IMR-90 (cell line): ENCODE measurements at regions of chr17 and their contacts with region 1.

Region 1: GRCh38 chr17:5097101-5097834 is 14.4 kb downstream of the ZNF232 start:
- DNase-seq: no peak
- ATAC-seq: no peak
- H3K4me3 ChIP-seq: peak overlapping the region; percentile 9; the same call in 1 of the 2 replicates
- H3K27ac ChIP-seq: no peak overlapping the region
- H3K4me1 ChIP-seq: no peaks in the 10 kb centered on the region
- H3K27me3 ChIP-seq: peaks cover 8% of the 10 kb centered on the region; the same call in 1 of the 2 replicates
- CTCF ChIP-seq: no peak
- POLR2A ChIP-seq: no peak
- RAD21 ChIP-seq: no peak

Region 2: DNA sequence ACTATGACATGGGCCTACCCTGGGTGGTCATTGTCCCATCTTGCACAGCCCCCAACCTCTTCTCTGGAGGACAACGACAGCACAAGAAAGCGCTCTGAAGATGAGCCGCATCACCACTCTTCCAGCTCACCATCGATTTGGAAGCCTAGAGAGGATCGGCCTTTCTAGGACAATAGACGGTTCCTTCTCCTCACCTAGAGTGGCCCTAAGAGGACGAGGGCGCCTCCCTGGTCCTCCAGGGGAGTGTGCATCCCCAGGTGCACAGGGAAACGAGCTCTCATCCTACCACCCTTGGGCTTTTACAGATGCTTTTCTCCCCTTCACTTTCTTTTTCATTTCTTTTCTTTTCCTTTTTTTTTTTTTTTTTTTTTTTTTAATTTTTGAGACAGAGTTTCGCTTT is 41.7 kb before region 1 on chr17:
- CTCF ChIA-PET with region 1: no interaction called
- POLR2A ChIA-PET with region 1: no interaction called
- dilution Hi-C with region 1: no loop called
- in situ Hi-C with region 1: no loop called
- intact Hi-C with region 1: no loop called
- DNase-seq: no peak
- ATAC-seq: no peak
- H3K4me3 ChIP-seq: no peak overlapping the region
- H3K27ac ChIP-seq: no peak overlapping the region
- H3K4me1 ChIP-seq: no peaks in the 10 kb centered on the region
- H3K27me3 ChIP-seq: peaks cover 9% of the 10 kb centered on the region
- CTCF ChIP-seq: no peak
- POLR2A ChIP-seq: no peak
- RAD21 ChIP-seq: no peak

Region 3: DNA sequence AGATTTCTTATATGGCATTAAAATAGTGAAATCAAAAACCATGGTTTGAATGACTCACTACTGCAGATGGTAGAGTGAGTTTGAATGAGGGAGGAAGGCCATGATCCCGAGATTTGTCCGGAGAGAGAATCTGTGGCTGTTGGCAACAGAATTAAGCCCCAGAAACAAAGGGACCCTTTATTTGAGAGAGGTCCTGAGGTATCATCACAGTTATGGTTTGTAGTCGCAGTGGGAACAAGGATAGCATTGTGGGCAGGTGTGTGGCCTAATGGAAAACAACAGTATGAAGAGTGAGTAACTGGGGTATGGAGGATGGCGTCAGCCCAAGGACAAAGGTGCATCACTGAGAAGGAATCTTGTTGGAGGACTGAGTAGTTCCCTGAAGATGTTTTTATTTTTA is 27.5 kb before region 1 on chr17:
- CTCF ChIA-PET with region 1: no interaction called
- POLR2A ChIA-PET with region 1: no interaction called
- dilution Hi-C with region 1: no loop called
- in situ Hi-C with region 1: no loop called
- intact Hi-C with region 1: no loop called
- DNase-seq: peak; percentile 16
- ATAC-seq: no peak
- H3K4me3 ChIP-seq: no peak overlapping the region
- H3K27ac ChIP-seq: no peak overlapping the region
- H3K4me1 ChIP-seq: no peaks in the 10 kb centered on the region
- H3K27me3 ChIP-seq: peaks cover 13% of the 10 kb centered on the region
- CTCF ChIP-seq: no peak
- POLR2A ChIP-seq: no peak
- RAD21 ChIP-seq: no peak

Region 4: DNA sequence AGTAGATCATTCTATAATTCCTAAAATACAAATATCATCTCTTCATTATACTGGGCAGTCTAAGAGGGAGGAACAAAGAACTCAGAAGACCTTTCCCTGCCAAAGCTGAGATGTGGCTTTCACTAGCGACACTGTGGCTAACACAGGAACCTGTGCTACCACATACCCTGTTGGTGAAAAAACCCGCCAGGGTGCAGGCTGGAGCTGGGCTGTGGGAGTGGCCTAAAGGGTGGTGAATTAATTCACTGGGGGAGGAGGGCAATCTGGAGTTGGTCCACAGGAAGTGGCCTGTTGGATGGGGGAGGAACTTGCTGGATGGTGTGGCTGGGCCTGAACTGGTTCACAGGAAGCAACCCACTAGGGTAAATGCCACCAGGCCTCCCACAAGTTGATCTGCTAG is 87.0 kb after region 1 on chr17:
- CTCF ChIA-PET with region 1: no interaction called
- POLR2A ChIA-PET with region 1: no interaction called
- dilution Hi-C with region 1: no loop called
- in situ Hi-C with region 1: no loop called
- intact Hi-C with region 1: loop called (anchors 10 kb)
- DNase-seq: no peak
- ATAC-seq: no peak
- H3K4me3 ChIP-seq: no peak overlapping the region
- H3K27ac ChIP-seq: no peak overlapping the region
- H3K4me1 ChIP-seq: no peaks in the 10 kb centered on the region
- H3K27me3 ChIP-seq: no peaks in the 10 kb centered on the region
- CTCF ChIP-seq: no peak
- POLR2A ChIP-seq: no peak
- RAD21 ChIP-seq: no peak

Region 5: GRCh38 chr17:5329784-5330557 is 232.7 kb after region 1 on chr17:
- CTCF ChIA-PET with region 1: no interaction called
- POLR2A ChIA-PET with region 1: no interaction called
- dilution Hi-C with region 1: no loop called
- in situ Hi-C with region 1: no loop called
- intact Hi-C with region 1: no loop called
- DNase-seq: peak; percentile 11
- ATAC-seq: peak; percentile 37
- H3K4me3 ChIP-seq: no peak overlapping the region
- H3K27ac ChIP-seq: no peak overlapping the region
- H3K4me1 ChIP-seq: peaks cover 3% of the 10 kb centered on the region
- H3K27me3 ChIP-seq: no peaks in the 10 kb centered on the region
- CTCF ChIP-seq: no peak
- POLR2A ChIP-seq: no peak
- RAD21 ChIP-seq: no peak